ENCODE measurements at regions of chr3 and their contacts with region 1.

Region 1: GRCh38 chr3:112582244-112582874 is 20.5 kb downstream of the SLC35A5 start:
- H3K4me3 Mint-ChIP-seq: no peak overlapping the region
- H3K27ac Mint-ChIP-seq: no peak overlapping the region
- H3K4me1 Mint-ChIP-seq: peaks cover 14% of the 10 kb centered on the region
- H3K27me3 Mint-ChIP-seq: no peaks in the 10 kb centered on the region

Region 2: DNA sequence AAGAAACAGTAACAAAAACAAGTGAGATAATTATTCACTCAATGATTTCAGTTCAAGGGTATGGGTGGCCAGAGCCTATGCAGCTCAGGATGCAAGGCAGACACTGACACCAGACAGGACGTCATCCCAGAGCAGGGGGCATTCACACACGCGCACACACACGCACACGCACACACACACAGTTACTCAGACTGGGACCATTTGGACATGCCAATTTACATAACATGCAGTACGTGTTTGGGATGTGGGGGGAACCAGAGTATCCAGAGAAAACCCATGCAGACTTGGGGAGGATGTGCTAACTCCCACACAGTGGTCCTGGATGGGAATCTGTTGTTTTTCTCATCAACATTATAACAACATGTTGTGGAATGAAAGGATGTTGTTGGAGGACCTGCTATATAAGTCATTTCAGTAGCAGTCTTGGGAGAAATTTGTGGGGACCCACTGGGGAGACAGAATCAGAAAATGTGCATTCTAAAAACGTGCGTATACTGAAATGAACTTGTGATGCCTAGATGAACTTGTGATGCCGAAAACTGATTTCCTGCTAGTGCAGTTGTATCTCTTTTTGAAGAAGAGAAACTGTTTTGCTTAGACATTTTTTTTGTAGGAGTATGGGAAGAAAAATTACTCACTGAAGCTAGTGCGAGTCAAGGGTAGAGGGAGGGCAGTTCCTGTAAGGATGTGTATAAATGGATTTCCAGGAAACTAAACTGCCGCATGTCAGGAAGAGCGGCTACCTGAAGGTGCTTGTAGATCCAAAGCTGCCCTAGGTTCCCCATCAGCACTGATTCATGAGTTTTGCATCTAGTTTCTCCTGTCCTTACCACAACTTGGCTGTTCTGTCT is 224.2 kb before region 1 on chr3:
- intact Hi-C with region 1: no loop called
- H3K4me3 Mint-ChIP-seq: no peak overlapping the region
- H3K27ac Mint-ChIP-seq: peak overlapping the region; percentile 21
- H3K4me1 Mint-ChIP-seq: peaks cover 26% of the 10 kb centered on the region
- H3K27me3 Mint-ChIP-seq: no peaks in the 10 kb centered on the region

Region 3: DNA sequence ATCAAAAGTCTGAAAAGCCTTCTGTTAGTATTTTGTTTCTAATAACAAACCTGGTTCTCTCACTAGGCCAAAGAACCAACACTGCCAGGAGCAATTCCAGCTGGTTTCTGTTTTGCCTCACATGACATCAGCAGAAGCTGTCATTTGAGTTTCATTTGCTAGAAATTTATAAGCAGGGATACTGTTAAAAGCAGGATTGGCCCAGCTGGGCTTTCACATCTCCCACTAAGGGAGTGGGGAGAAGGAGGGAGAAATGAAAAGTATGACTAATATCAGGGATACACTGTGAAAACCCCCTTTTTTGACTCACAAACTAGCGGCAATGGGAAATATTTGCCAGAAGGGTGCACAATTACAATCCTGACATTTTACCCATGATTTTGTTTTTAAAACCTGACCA is 53.3 kb after region 1 on chr3:
- intact Hi-C with region 1: loop called (anchors 10 kb)
- H3K4me3 Mint-ChIP-seq: no peak overlapping the region
- H3K27ac Mint-ChIP-seq: no peak overlapping the region
- H3K4me1 Mint-ChIP-seq: peaks cover 15% of the 10 kb centered on the region
- H3K27me3 Mint-ChIP-seq: peaks cover 5% of the 10 kb centered on the region

Region 4: GRCh38 chr3:112709911-112710310 is 127.6 kb after region 1 on chr3:
- intact Hi-C with region 1: loop called (anchors 10 kb)
- H3K4me3 Mint-ChIP-seq: no peak overlapping the region
- H3K27ac Mint-ChIP-seq: peak overlapping the region; percentile 26
- H3K4me1 Mint-ChIP-seq: peaks cover 23% of the 10 kb centered on the region
- H3K27me3 Mint-ChIP-seq: peaks cover 5% of the 10 kb centered on the region